Natural killer cell (primary cell): ENCODE measurements at regions of chr14 and their contacts with region 1.

Region 1: DNA sequence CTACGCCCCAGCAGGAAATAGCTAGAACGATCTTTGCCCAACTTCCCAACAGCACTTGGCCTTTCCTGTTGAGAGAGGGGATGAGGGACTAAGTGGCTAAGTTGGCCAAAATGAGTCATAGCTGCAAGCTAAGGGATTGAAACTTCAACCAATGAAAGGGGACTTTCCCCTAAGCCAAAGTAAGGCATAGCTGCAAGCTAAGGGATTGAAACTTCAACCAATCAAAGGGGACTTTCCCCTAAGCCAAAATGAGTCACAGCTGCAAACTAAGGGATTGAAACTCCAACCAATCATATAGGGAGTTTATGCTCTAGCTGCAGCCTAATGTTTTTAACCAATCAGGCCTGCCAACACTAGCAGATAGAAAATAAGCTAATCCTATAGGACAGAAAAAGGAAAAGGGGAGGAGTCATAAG is 100.5 kb upstream of the SSTR1 start:
- DNase-seq: peak in 1 of 2 donors; percentile 19
- ATAC-seq: peak in 2 of 3 donors; percentile 39 to 72
- H3K4me3 ChIP-seq: no peak overlapping the region
- H3K4me3 Mint-ChIP-seq: no peak overlapping the region
- H3K27ac ChIP-seq: no peak overlapping the region
- H3K27ac Mint-ChIP-seq: peak overlapping the region in 1 of 2 donors; percentile 43
- H3K4me1 ChIP-seq: no peaks in the 10 kb centered on the region
- H3K4me1 Mint-ChIP-seq: peaks cover 11 to 16% of the 10 kb centered on the region in 2 donors
- H3K27me3 ChIP-seq: no peaks in the 10 kb centered on the region
- H3K27me3 Mint-ChIP-seq: no peaks in the 10 kb centered on the region
- CTCF ChIP-seq: no peak

Region 2: DNA sequence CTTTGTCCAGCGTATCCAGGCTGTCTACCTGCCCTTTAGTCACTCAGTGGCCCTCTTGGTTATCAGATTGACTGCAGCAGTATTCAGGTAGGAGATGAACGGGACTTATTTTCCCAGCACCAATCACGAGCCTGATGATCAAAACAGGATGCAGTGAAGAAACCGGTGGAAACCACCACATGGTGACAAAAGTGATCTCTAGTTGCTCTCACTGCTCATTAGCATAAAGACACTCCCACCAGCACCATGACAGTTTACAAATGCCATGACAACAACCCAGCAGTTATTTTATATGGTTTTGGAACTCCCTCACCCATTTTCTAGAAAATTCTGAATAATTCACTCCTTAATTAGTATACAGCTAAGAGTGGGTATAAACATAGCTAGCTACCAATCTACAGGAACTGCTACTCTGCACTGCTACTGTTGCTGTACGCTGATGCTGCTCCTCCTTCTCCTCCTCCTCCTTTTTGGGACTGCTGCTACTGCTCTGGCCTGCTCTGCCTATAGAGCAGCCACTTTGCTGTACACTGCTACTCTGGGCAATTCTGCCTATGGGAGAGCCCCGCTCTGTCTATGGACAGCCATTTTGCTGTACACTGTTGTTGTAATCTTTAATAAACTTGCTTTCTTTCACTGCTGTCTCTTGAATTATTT is 42.0 kb before region 1 on chr14:
- intact Hi-C with region 1: loop called (anchors 1 kb)
- DNase-seq: peak; percentile 57 to 91
- ATAC-seq: peak; percentile 92 to 98 (median 94)
- H3K4me3 ChIP-seq: no peak overlapping the region
- H3K4me3 Mint-ChIP-seq: peak overlapping the region; percentile 80
- H3K27ac ChIP-seq: peak overlapping the region; percentile 92
- H3K27ac Mint-ChIP-seq: peak overlapping the region; percentile 93 to 97
- H3K4me1 ChIP-seq: peaks cover 7% of the 10 kb centered on the region
- H3K4me1 Mint-ChIP-seq: peaks cover 16 to 33% of the 10 kb centered on the region in 2 donors
- H3K27me3 ChIP-seq: no peaks in the 10 kb centered on the region
- H3K27me3 Mint-ChIP-seq: no peaks in the 10 kb centered on the region
- CTCF ChIP-seq: no peak